Activated CD4-positive, alpha-beta T cell treated with anti-CD3 and anti-CD28 coated beads for 36 hours (primary cell): ENCODE measurements at regions of chr15 and their contacts with region 1.

Region 1: DNA sequence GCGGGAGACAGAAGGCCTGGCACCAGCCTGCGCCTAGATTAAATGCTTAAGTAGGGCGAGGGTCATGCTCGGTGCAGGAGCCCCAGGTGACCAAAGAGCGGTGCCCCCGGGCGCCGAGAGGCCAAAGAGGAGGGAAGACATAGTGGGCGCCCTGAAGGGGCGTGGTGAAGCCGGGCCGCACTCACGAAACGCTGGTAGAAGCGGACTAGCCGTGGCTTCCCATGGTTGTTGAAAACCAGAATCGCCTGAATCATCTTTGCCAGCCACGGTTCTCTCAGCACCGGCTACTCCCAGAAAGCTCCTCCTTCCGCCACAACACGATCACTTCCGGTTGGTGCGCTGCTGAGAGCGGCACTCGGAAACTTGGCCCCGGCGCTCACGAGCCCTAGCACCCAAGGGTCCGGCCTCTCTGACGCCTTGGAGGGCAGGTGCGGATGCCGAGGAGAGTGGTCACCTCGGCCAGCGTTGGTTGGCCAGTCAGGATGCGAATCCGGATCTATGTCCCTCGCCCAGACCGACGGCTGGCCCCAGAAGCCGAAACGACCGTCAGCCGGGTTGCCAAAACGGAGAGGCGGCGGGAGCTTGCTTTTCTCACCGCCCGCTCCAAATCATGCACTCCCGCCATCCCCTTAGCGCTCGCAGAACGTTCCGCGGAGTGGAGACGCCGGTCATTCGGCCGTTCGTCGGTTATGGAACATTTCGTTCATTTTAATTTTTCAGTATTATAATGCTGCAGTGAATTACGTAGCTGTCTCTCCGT is at the start of gene AP3S2:
- DNase-seq: peak; percentile 96
- ATAC-seq: peak; percentile 82
- H3K4me3 Mint-ChIP-seq: peak within 1 kb of the TSS; percentile 98
- H3K27ac Mint-ChIP-seq: peak within 1 kb of the TSS; percentile 97
- H3K4me1 Mint-ChIP-seq: peaks cover 43% of the 10 kb centered on the region
- H3K27me3 Mint-ChIP-seq: no peaks in the 10 kb centered on the region
- total RNA-seq, gene AP3S2: 12.4 to 15.3 TPM

Region 2: DNA sequence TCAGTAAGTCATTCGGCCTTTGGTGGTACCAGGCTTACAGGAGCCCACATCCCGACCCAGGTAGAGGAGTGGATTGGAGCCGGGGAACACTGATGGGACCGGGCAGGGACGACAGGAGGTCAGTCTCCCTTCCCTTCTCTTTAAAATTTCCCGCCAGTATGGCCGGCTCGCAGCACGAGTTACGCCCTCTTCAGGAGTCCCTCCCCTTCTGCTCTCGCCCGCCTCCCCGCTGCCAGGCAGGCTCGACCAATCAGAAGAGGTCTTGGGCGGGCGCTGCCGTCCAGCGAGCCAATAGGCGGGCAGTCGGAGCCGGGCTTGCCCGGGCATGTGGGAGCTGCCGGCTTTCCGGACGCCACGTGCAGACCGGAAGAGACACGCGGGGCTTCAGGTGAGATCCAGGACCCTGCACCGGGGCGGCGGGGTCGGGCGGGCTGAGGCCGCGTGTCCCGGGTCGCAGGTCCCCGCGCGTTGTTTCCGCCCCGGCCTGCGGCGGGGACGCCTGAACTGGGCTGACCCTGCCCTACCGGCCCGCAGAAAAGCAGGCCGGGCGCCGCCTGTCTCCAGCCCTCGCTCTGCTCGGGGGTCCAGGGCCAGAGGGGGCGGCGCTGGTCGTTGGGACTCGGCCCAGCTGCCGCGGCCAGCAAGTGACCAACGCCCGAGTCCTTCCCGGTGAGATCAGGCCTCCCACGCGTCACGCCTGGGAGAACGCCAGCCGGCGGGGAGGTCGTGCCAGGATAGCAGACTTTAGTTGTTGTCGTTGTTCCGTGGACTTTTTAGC is 1272.7 kb before region 1 on chr15 and contains the start of gene AEN:
- CTCF ChIA-PET with region 1: no interaction called
- POLR2A ChIA-PET with region 1: no interaction called
- intact Hi-C with region 1: loop called in 1 of 2 experiments (anchors 5 kb)
- DNase-seq: peak; percentile 97
- ATAC-seq: peak; percentile 83
- H3K4me3 Mint-ChIP-seq: peak within 1 kb of the TSS; percentile 90
- H3K27ac Mint-ChIP-seq: peak within 1 kb of the TSS; percentile 94
- H3K4me1 Mint-ChIP-seq: peaks cover 41% of the 10 kb centered on the region
- H3K27me3 Mint-ChIP-seq: peaks cover 5% of the 10 kb centered on the region
- total RNA-seq, gene AEN: 42.8 to 52.9 TPM

Region 3: DNA sequence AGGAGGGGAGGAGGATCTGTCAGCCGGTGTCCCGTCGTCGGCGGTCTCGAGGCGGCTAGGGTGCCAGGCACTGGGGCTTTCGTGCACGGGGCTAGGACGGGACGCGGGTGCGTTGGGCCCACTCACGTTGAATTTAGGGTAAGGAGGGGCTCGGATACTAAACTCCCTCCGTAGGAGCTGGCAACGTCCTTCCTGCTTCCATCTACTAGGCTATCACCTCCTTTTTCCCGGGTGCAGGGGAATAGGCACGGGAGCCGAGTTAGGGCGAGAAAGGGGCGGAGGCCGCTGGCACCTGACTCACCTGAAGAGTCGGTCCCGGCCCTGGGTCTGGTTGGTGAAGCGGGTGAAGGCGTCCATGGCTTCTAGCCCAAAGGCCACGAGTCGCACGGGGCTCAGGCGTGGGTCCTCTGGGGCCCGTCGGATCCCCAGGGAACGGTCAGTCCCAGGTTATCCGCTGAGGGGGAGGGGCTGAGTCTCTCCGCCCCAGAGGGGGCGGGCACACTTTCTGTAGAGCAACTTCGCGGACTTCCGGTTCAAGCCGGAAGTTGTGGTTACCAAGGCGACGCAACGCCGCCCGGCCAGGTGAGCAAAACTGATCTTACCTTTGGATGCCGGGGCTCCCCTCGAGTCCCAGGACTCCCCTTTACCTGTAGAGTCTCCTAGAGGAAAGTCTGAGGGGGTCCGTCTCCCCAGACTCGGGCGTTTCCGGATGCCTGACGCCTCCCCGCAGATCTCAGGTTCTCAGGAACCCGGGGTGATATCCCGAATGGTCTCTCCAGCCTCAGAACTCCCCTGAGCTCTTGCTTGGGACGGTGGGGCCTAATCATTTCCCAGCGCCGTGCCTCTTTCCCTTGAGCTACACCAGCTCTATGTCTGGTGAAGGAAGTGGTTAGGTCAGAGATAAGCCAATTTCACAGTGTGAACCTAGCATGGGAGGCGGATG is 203.3 kb before region 1 on chr15 and contains the starts of genes PEX11A and WDR93:
- CTCF ChIA-PET with region 1: no interaction called
- POLR2A ChIA-PET with region 1: no interaction called
- intact Hi-C with region 1: loop called in 1 of 2 experiments (anchors 1 kb)
- DNase-seq: peak; percentile 87
- ATAC-seq: peak; percentile 92
- H3K4me3 Mint-ChIP-seq: peak within 1 kb of the TSS; percentile 85
- H3K27ac Mint-ChIP-seq: peak within 1 kb of the TSS; percentile 82
- H3K4me1 Mint-ChIP-seq: peaks cover 12% of the 10 kb centered on the region
- H3K27me3 Mint-ChIP-seq: no peaks in the 10 kb centered on the region
- total RNA-seq, gene PEX11A: 4.7 to 5.3 TPM
- total RNA-seq, gene WDR93: not detected

Region 4: GRCh38 chr15:90001683-90002427 is 108.0 kb after region 1 on chr15:
- CTCF ChIA-PET with region 1: interaction called, 4 read pairs
- POLR2A ChIA-PET with region 1: interaction called, 9 read pairs
- intact Hi-C with region 1: loop called (anchors 1 to 5 kb)
- DNase-seq: peak; percentile 77
- ATAC-seq: peak; percentile 27
- H3K4me3 Mint-ChIP-seq: peak overlapping the region; percentile 82
- H3K27ac Mint-ChIP-seq: peak overlapping the region; percentile 88
- H3K4me1 Mint-ChIP-seq: peaks cover 61% of the 10 kb centered on the region
- H3K27me3 Mint-ChIP-seq: no peaks in the 10 kb centered on the region

Region 5: DNA sequence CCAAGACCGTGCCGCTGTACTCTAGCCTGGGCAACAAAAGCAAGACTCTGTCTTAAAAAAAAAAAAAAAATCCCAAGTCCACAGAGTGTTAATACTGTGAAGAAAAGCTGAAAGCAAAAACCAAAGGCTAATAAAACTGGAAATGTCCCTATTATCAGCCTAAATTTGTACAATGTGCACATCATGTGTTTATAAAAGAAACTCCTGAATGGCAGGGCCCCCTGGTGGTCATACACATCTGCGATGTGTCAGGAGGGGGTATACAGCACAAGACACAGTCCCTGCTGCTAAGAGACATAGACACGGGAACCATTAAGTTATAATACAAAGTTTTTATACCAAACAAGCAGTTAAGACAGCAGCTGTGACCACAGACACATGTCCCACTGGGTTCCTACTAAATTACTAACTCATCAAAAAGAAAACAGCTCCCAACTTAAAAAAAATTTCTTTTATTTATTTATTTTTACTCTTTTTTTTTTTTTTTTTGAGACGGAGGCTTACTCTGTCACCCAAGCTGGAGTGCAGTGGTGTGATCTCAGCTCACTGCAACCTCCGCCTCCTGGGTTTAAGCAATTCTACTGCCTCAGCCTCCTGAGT is 177.4 kb after region 1 on chr15:
- CTCF ChIA-PET with region 1: interaction called, 15 read pairs
- POLR2A ChIA-PET with region 1: interaction called, 3 read pairs
- intact Hi-C with region 1: loop called (anchors 1 kb)
- DNase-seq: peak; percentile 90
- ATAC-seq: peak; percentile 88
- H3K4me3 Mint-ChIP-seq: no peak overlapping the region
- H3K27ac Mint-ChIP-seq: peak overlapping the region; percentile 47
- H3K4me1 Mint-ChIP-seq: peaks cover 21% of the 10 kb centered on the region
- H3K27me3 Mint-ChIP-seq: no peaks in the 10 kb centered on the region

Region 6: DNA sequence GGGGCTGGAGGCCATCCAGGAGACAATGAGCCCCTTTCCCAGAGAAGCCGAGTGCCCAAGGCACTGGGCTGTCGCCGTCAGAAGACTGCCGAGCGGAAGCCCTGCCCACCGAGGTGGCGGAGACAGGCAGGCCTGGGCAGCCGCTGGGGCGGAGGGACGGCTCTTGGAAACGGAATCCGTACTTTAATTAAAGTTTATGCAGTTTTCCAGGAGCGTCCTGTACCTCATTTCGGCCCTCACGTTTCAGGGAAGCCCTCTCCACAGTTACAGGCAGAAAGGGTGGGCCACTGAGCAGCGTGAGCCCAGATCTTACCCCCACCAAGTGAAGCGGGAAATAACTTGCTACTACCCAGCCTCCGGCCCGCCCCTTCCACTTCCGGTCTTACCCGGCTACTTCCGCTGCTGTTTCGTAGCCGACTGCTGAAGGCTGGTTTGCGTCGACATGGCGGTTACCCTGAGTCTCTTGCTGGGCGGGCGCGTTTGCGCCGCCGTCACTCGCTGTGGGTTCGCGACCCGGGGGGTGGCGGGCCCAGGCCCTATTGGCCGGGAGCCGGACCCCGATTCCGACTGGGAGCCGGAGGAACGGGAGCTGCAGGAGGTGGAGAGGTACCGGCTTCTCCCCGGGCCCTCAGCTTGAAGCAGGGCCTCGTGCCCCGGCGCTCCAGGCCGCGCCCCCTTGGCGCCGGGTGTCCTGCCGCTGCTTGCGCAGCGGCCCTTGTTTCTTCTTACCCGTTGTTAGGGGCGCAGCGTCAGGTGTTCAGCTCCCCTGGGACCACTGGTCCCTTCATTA is 371.6 kb after region 1 on chr15 and contains the start of gene NGRN:
- CTCF ChIA-PET with region 1: no interaction called
- POLR2A ChIA-PET with region 1: no interaction called
- intact Hi-C with region 1: loop called (anchors 1 to 2 kb)
- DNase-seq: peak; percentile 95
- ATAC-seq: peak; percentile 87
- H3K4me3 Mint-ChIP-seq: peak within 1 kb of the TSS; percentile 98
- H3K27ac Mint-ChIP-seq: peak within 1 kb of the TSS; percentile 99
- H3K4me1 Mint-ChIP-seq: peaks cover 37% of the 10 kb centered on the region
- H3K27me3 Mint-ChIP-seq: no peaks in the 10 kb centered on the region
- total RNA-seq, gene NGRN: 22.0 to 23.9 TPM